Mammary epithelial cell (primary cell): ENCODE measurements at regions of chr4 and their contacts with region 1.

Region 1: GRCh38 chr4:107077192-107077591 is 41.1 kb upstream of the DKK2 start:
- DNase-seq: no peak
- H3K4me3 ChIP-seq: no peak overlapping the region
- H3K27ac ChIP-seq: no peak overlapping the region
- H3K4me1 ChIP-seq: no peaks in the 10 kb centered on the region
- H3K27me3 ChIP-seq: no peaks in the 10 kb centered on the region
- CTCF ChIP-seq: no peak

Region 2: DNA sequence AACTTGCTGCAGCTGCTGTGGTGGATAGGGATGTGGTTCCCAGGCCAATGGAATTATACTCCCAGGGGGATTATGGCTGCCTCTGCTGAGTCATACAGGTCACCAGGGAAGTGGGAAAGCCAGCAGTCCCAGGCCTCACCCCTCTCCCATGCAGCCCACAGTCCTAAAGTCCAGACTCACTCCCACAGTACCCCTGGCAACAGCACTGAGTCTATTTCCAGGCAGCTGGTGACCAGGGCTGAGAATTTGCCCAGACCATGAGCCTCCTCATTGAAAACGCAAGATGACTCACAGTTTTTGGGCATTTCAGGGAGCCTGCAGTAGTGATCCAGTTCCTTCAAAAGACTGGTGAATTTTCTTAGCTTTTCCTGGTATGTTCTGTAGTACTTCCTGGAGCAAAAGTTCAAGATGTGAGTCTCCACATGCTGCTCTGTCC is 1044.3 kb before region 1 on chr4:
- CTCF ChIA-PET with region 1: no interaction called
- dilution Hi-C with region 1: no loop called
- in situ Hi-C with region 1: no loop called
- intact Hi-C with region 1: no loop called
- DNase-seq: no peak
- H3K4me3 ChIP-seq: no peak overlapping the region
- H3K27ac ChIP-seq: no peak overlapping the region
- H3K4me1 ChIP-seq: no peaks in the 10 kb centered on the region
- H3K27me3 ChIP-seq: peaks cover 5% of the 10 kb centered on the region
- CTCF ChIP-seq: no peak

Region 3: GRCh38 chr4:107153228-107153627 is 76.0 kb after region 1 on chr4:
- CTCF ChIA-PET with region 1: interaction called, 13 read pairs
- dilution Hi-C with region 1: no loop called
- in situ Hi-C with region 1: no loop called
- intact Hi-C with region 1: no loop called
- DNase-seq: no peak
- H3K4me3 ChIP-seq: no peak overlapping the region
- H3K27ac ChIP-seq: no peak overlapping the region
- H3K4me1 ChIP-seq: no peaks in the 10 kb centered on the region
- H3K27me3 ChIP-seq: peaks cover 2% of the 10 kb centered on the region
- CTCF ChIP-seq: peak; percentile 34 to 41